Panc1 (cell line): ENCODE measurements at regions of chr3 and their contacts with region 1.

Region 1: DNA sequence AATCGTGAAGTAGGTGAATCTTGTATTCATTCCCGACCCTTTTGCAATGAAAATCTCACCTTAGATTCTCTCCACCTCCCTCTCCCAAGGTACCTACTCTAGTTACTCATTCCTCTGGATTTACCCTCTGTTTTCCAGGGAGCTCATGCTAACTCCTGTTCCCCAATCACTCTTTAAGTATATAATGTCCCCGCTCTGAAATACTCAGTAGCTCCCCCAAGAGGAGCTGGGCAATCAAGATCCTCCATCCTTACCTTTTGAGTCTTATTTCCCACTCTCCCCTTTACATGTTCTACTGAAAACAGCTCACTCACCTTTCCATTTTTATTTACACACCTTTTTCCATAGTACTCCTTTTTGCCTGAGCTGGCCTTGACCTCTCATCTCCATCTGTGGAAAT is 599.9 kb downstream of the RBMS3 start:
- DNase-seq: no peak
- ATAC-seq: no peak
- H3K4me3 ChIP-seq: no peak overlapping the region
- H3K27ac ChIP-seq: no peak overlapping the region
- H3K4me1 ChIP-seq: no peaks in the 10 kb centered on the region
- H3K27me3 ChIP-seq: no peaks in the 10 kb centered on the region
- CTCF ChIP-seq: no peak

Region 2: GRCh38 chr3:29171043-29171990 is 709.5 kb before region 1 on chr3:
- CTCF ChIA-PET with region 1: interaction called, 11 read pairs
- POLR2A ChIA-PET with region 1: no interaction called
- in situ Hi-C with region 1: no loop called
- intact Hi-C with region 1: no loop called
- DNase-seq: no peak
- ATAC-seq: no peak
- H3K4me3 ChIP-seq: no peak overlapping the region
- H3K27ac ChIP-seq: no peak overlapping the region
- H3K4me1 ChIP-seq: no peaks in the 10 kb centered on the region
- H3K27me3 ChIP-seq: no peaks in the 10 kb centered on the region
- CTCF ChIP-seq: no peak